ENCODE measurements at regions of chr15 and their contacts with region 1.

Region 1: DNA sequence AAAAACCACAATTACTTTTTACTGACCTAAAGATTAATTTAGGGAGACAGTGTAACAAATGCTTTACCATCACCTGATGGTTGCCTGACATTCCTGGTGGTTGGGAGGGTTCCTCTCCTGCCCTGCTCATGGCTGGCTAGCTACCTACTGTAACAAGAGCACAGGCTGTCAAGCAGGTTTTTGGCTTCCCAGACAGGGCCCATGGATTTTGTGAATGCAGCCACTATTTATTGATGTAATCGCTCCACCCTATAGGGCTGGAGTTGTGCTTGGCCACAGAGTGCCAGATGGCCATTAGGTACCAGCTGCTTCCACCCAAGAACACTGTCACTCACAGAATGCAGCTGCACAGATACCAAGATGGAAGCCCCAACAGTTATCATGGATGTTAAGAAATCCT is 31.0 kb upstream of the KLHL25 start:
- DNase-seq: no peak
- H3K4me3 ChIP-seq: no peak overlapping the region
- H3K27ac ChIP-seq: no peak overlapping the region
- H3K4me1 ChIP-seq: no peaks in the 10 kb centered on the region
- H3K27me3 ChIP-seq: no peaks in the 10 kb centered on the region
- CTCF ChIP-seq: no peak
- EP300 ChIP-seq: no peak
- POLR2A ChIP-seq: no peak

Region 2: GRCh38 chr15:85302271-85302670 is 523.4 kb before region 1 on chr15:
- intact Hi-C with region 1: loop called (anchors 5 kb)
- DNase-seq: no peak
- H3K4me3 ChIP-seq: no peak overlapping the region
- H3K27ac ChIP-seq: no peak overlapping the region
- H3K4me1 ChIP-seq: peaks cover 0 to 2% (median 1%) of the 10 kb centered on the region in 4 donors
- H3K27me3 ChIP-seq: no peaks in the 10 kb centered on the region
- CTCF ChIP-seq: no peak
- EP300 ChIP-seq: no peak
- POLR2A ChIP-seq: no peak

Region 3: DNA sequence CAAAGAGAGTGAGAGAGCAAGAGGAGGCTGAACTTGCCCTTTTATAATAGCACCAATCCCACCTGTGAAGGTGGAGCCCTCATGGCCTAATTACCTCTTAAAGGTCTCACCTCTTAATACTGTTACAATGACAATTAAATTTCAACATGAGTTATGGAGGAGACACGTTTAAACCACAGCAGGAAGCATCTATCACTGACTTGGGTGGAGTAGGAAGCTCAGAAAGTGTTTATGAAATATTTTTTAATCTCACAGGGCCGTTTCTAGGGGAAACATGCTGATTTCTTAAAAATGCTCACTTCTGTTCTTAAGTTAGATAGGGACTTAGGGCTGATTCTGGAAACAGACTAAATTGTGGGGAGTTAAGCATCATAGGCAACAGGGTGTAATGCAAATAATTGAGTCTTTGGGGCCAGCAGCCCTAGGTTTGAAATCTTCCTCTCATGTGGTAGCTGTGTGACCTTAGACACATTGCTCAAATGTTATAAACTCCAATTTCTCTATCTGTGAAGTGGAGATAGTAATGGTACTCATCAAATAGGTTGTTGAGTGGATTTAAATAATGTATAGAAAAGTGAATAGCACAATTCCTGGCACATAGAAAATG is 102.3 kb after region 1 on chr15:
- intact Hi-C with region 1: no loop called
- DNase-seq: no peak
- H3K4me3 ChIP-seq: no peak overlapping the region
- H3K27ac ChIP-seq: no peak overlapping the region
- H3K4me1 ChIP-seq: no peaks in the 10 kb centered on the region
- H3K27me3 ChIP-seq: no peaks in the 10 kb centered on the region
- CTCF ChIP-seq: no peak
- EP300 ChIP-seq: no peak
- POLR2A ChIP-seq: no peak